ENCODE measurements at regions of chr3 and their contacts with region 1.

Region 1: DNA sequence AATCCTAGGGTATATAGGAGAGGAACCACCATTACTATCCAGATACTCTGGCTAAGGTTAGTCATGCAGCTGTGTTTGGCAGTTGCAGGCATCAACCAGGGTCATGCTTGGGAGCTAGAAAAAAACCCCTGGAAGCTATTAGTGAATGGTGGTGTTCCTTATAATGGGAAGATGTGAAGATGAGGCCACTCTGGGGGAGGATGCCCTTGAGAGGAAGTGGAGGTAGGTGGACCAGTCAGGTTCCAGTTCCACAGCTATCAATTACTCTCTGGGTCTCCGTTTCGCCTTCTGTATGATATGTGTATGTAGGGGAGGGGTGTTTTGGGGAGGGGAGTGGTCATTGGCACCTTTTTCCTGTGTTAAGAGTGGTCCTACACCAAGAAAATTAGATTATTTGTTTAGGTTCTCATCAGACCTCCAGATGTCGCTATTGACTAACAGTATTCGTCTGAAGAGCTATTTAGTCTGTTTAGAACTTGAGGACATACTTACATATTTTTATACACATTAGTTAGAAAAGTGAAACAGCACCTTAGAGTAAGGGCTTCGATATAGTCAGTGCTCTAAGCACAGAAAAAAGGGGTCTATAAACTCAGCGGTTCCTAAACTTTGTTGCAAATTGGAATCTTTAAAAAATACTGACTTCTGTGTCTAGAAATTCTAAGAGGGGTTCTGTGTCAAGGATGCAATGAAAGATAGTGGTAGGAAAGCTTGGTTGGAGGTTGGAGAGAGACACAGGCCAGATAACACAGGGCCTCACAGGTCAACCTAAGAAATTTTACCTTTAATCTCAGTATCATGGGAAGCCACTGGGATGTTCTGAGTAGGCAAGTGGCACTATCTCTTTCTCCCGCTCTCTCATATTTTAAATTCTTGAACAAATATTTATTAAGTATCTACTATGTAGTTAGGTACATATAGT is 9.1 kb upstream of the HPS3 start:
- DNase-seq: peak; percentile 41
- H3K4me3 Mint-ChIP-seq: no peak overlapping the region
- H3K27ac Mint-ChIP-seq: no peak overlapping the region
- H3K4me1 Mint-ChIP-seq: no peaks in the 10 kb centered on the region
- H3K27me3 Mint-ChIP-seq: no peaks in the 10 kb centered on the region
- CTCF ChIP-seq: peak; percentile 81

Region 2: GRCh38 chr3:149031096-149031495 is 89.2 kb before region 1 on chr3:
- CTCF ChIA-PET with region 1: no interaction called
- intact Hi-C with region 1: no loop called
- DNase-seq: no peak
- H3K4me3 Mint-ChIP-seq: no peak overlapping the region
- H3K27ac Mint-ChIP-seq: no peak overlapping the region
- H3K4me1 Mint-ChIP-seq: no peaks in the 10 kb centered on the region
- H3K27me3 Mint-ChIP-seq: no peaks in the 10 kb centered on the region
- CTCF ChIP-seq: no peak

Region 3: GRCh38 chr3:149330609-149331331 is 210.5 kb after region 1 on chr3:
- CTCF ChIA-PET with region 1: interaction called, 7 read pairs
- intact Hi-C with region 1: loop called (anchors 1 kb)
- DNase-seq: peak; percentile 43
- H3K4me3 Mint-ChIP-seq: no peak overlapping the region
- H3K27ac Mint-ChIP-seq: peak overlapping the region; percentile 14
- H3K4me1 Mint-ChIP-seq: peaks cover 39% of the 10 kb centered on the region
- H3K27me3 Mint-ChIP-seq: no peaks in the 10 kb centered on the region
- CTCF ChIP-seq: no peak

Region 4: DNA sequence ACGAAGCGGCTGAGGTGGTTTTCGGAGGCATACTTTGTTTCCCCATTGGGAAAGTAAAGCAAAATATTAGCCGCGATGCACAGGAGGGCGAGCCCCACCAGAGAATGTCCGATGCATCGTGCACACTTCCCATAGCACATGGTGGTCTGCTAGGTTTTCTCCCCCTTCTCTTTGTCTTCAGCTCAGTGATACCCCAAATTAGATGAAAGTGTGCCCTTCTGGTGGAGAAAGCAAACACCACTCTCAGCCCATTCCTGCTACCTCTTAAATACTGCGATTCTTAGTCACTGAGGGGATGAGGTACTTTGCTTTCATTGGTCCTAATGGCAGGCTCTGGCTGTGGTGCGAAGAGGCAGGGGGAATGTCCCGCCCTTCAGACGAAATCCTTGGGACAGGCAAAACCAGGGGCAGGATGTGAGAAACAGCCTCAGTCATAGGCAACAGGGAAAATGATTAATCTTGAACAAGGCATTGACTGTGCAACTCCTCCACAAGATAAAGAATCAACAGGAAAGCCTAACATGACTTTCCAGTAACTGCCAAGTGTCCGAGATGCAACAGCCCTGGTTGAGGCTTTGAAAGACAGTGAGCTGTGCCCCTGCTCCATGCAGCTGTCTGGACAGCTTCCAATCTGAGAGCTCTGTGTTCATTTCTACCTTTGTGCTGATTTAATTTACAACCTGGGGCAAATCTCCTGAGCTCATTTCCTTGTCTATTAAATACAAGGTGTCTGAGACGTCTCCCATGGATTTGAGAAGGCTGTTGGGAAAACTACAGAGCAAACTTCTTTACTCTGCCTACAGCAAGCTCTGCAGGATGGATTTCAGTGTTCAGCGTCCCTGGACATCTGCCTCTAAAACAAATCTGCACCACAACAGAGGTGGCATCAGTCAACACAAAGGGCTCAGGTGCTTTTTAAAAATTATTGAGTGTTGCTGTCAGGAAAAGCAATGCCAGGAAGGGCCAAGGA is 257.4 kb after region 1 on chr3 and contains the start of gene TM4SF1:
- CTCF ChIA-PET with region 1: no interaction called
- intact Hi-C with region 1: no loop called
- DNase-seq: peak; percentile 97
- H3K4me3 Mint-ChIP-seq: peak within 1 kb of the TSS; percentile 75
- H3K27ac Mint-ChIP-seq: peak within 1 kb of the TSS; percentile 95
- H3K4me1 Mint-ChIP-seq: peaks cover 57% of the 10 kb centered on the region
- H3K27me3 Mint-ChIP-seq: no peaks in the 10 kb centered on the region
- CTCF ChIP-seq: peak; percentile 19
- total RNA-seq, gene TM4SF1: 919 and 981 TPM in 2 replicates

Region 5: GRCh38 chr3:149969940-149970715 is 849.8 kb after region 1 on chr3:
- CTCF ChIA-PET with region 1: no interaction called
- intact Hi-C with region 1: no loop called
- DNase-seq: peak; percentile 91
- H3K4me3 Mint-ChIP-seq: peak overlapping the region; percentile 80
- H3K27ac Mint-ChIP-seq: peak overlapping the region; percentile 87
- H3K4me1 Mint-ChIP-seq: peaks cover 32% of the 10 kb centered on the region
- H3K27me3 Mint-ChIP-seq: no peaks in the 10 kb centered on the region
- CTCF ChIP-seq: no peak